A673 (cell line): ENCODE measurements at regions of chrX and their contacts with region 1.

Region 1: GRCh38 chrX:80841259-80841658 is 31.6 kb upstream of the BRWD3 start:
- DNase-seq: no peak
- H3K4me3 ChIP-seq: no peak overlapping the region
- H3K27ac ChIP-seq: no peak overlapping the region
- H3K4me1 ChIP-seq: no peaks in the 10 kb centered on the region
- H3K27me3 ChIP-seq: no peaks in the 10 kb centered on the region
- CTCF ChIP-seq: no peak

Region 2: DNA sequence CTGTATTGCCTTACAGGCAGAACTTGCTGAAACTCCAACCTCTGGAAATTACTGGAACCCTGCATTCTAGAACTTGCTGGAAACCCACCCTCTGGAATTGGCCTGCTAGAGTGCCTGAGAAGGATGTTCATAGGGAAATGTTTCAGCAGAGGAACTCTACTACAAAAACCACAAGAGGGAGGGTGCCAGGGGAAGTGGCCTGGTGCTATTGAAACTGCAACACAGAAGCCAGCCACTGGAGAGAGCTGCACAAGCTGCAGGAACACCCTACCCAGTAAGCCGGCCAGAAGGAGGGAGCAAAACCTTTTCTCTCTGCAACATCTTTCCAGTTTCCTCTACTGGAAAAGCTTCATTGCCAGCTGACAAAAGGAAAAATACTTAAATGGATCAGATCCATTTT is 29.1 kb before region 1 on chrX:
- CTCF ChIA-PET with region 1: no interaction called
- POLR2A ChIA-PET with region 1: interaction called, 11 read pairs
- intact Hi-C with region 1: no loop called
- DNase-seq: peak; percentile 35
- H3K4me3 ChIP-seq: no peak overlapping the region
- H3K27ac ChIP-seq: no peak overlapping the region
- H3K4me1 ChIP-seq: no peaks in the 10 kb centered on the region
- H3K27me3 ChIP-seq: no peaks in the 10 kb centered on the region
- CTCF ChIP-seq: peak; percentile 34; the same call in 1 of the 2 replicates

Region 3: DNA sequence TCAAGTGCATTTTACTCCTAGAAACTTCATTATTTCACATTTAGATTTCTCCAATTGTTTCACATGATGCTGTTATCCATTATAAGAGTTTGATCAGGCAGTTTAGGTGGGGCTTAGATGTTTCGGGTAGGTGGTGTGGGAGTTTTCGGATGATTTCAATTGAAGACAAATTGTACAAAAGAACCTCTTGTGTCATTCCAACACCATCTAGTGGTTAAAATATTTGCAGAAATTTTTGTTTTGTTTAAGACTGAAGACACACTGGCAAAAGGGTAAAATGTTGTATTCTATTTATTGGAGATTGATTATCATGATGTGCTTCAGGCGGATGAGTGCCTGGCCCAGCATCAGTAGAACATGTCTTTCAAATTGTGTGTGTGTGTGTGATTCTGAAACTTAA is 573.4 kb after region 1 on chrX:
- CTCF ChIA-PET with region 1: no interaction called
- POLR2A ChIA-PET with region 1: no interaction called
- intact Hi-C with region 1: no loop called
- DNase-seq: peak; percentile 0
- H3K4me3 ChIP-seq: no peak overlapping the region
- H3K27ac ChIP-seq: no peak overlapping the region
- H3K4me1 ChIP-seq: no peaks in the 10 kb centered on the region
- H3K27me3 ChIP-seq: no peaks in the 10 kb centered on the region
- CTCF ChIP-seq: no peak